ENCODE measurements at regions of chr21 and their contacts with region 1.

Region 1: GRCh38 chr21:33542640-33543504 is at the start of gene SON:
- DNase-seq: peak; percentile 100
- ATAC-seq: peak; percentile 88 to 92
- H3K4me3 ChIP-seq: peak within 1 kb of the TSS; percentile 71 to 85 (median 79)
- H3K27ac ChIP-seq: peak within 1 kb of the TSS; percentile 95 to 99 (median 99)
- H3K4me1 ChIP-seq: peaks cover 31 to 38% of the 10 kb centered on the region in 2 donors
- H3K27me3 ChIP-seq: no peaks in the 10 kb centered on the region
- CTCF ChIP-seq: peak in 2 of 5 experiments; percentile 4 to 13
- POLR2A ChIP-seq: peak; percentile 90 to 92
- total RNA-seq, gene SON: 109 to 390 (median 126) TPM

Region 2: DNA sequence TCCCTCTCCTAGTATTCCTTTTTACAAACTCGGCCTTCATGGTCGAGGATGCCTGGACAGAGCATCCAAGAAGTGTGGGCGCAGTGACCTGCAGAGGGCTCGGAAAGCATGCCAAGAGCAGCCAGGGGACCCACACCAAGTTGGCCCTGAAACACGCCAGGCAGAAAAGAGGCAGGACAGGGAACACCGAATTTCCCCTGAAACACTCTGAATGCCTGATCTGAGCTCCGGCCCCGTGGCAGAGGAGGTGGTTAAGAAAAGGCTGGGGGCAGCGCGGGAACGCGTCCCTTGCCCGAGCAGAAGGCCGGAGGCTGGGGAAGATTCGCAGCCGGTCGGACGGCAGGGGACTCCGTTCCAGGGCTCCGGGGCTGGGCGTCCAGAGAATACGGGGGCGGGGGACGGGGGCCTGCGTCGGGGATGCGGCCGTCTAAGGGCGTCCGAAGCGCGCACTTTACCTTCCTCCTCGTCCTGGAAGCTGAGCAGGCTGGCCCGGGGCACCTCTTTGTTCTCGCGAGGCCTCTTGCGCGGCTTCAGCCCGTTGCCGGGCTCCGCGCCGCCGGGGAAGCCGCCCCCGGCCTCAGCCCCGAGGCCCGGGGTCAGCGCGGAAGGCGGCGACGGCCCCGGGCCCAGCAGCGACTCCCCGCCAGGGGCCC is 771.9 kb before region 1 on chr21:
- in situ Hi-C with region 1: loop called in 1 of 4 experiments (anchors 25 kb)
- intact Hi-C with region 1: loop called (anchors 5 kb)
- DNase-seq: peak; percentile 27 to 42
- ATAC-seq: peak; percentile 53 to 60
- H3K4me3 ChIP-seq: peak overlapping the region; percentile 83 to 94 (median 86)
- H3K27ac ChIP-seq: peak overlapping the region; percentile 87 to 95 (median 88)
- H3K4me1 ChIP-seq: peaks cover 34 to 40% of the 10 kb centered on the region in 2 donors
- H3K27me3 ChIP-seq: peaks cover 0 to 4% (median 0%) of the 10 kb centered on the region in 3 donors
- CTCF ChIP-seq: no peak
- POLR2A ChIP-seq: no peak

Region 3: GRCh38 chr21:33308586-33309490 is 234.0 kb before region 1 on chr21:
- in situ Hi-C with region 1: no loop called
- intact Hi-C with region 1: no loop called
- DNase-seq: no peak
- ATAC-seq: no peak
- H3K4me3 ChIP-seq: no peak overlapping the region
- H3K27ac ChIP-seq: no peak overlapping the region
- H3K4me1 ChIP-seq: no peaks in the 10 kb centered on the region
- H3K27me3 ChIP-seq: no peaks in the 10 kb centered on the region
- CTCF ChIP-seq: no peak
- POLR2A ChIP-seq: no peak

Region 4: GRCh38 chr21:33479679-33480480 is 63.0 kb before region 1 on chr21 and contains the start of gene TMEM50B:
- in situ Hi-C with region 1: no loop called
- intact Hi-C with region 1: loop called (anchors 1 kb)
- DNase-seq: peak; percentile 94 to 95
- ATAC-seq: peak; percentile 90 to 91
- H3K4me3 ChIP-seq: peak within 1 kb of the TSS; percentile 74 to 99 (median 88)
- H3K27ac ChIP-seq: peak within 1 kb of the TSS; percentile 88 to 98 (median 94)
- H3K4me1 ChIP-seq: peaks cover 13 to 14% of the 10 kb centered on the region in 2 donors
- H3K27me3 ChIP-seq: no peaks in the 10 kb centered on the region
- CTCF ChIP-seq: peak; percentile 44 to 68 (median 52)
- POLR2A ChIP-seq: peak; percentile 94 to 97
- total RNA-seq, gene TMEM50B: 33.2 to 47.1 (median 44.6) TPM

Region 5: GRCh38 chr21:33491373-33492102 is 51.3 kb before region 1 on chr21 and contains the start of gene DNAJC28:
- in situ Hi-C with region 1: no loop called
- intact Hi-C with region 1: loop called (anchors 1 kb)
- DNase-seq: peak; percentile 81 to 88
- ATAC-seq: peak; percentile 97 to 99
- H3K4me3 ChIP-seq: peak within 1 kb of the TSS; percentile 59 to 93 (median 82)
- H3K27ac ChIP-seq: peak within 1 kb of the TSS; percentile 86 to 91 (median 88)
- H3K4me1 ChIP-seq: peaks cover 3 to 12% of the 10 kb centered on the region in 2 donors
- H3K27me3 ChIP-seq: no peaks in the 10 kb centered on the region
- CTCF ChIP-seq: no peak
- POLR2A ChIP-seq: peak; percentile 44 to 50
- total RNA-seq, gene DNAJC28: 1.5 to 3.4 (median 2.5) TPM

Region 6: DNA sequence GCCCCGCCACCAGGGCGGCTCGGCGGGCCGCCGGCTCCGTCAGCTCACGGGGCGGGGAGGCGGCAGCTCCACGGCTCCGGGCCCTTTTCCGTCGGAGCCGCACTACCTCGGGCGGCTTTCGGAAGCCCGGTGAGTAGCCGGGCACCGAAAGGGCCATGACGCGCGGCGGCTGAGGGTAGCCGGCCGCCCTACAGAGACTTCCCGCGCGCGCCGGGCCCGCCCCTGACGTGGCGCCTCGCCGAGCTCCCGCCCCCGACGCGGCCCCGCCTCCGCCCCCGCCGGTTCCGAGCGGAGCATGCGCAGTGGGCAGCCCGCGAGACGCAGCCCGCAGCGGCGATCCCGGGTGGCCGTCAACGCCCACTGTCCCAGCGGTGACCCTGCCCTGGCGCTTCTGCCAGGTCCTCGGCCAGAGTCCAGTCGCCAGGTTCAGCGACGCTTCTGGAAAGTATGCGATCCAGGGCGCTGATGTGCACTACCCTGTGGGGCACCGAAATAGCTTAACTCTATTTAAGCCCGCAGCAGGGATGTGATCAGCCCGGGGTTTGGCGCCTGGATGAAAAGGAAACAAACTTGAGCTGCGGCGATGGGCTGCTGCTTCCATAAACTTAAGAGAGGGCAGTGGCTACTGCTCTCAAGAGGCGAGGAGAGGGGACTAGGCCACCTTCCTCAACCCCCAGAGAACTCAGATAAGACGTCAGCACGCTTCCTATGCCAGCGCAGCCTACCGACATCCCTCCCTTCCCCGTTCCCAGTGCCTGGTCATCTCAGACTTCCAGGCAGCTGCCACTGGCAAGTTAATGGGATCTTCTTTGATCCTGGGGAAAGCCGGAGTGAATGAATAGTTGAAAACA is 45.8 kb after region 1 on chr21 and contains the start of gene DONSON:
- in situ Hi-C with region 1: no loop called
- intact Hi-C with region 1: loop called (anchors 2 kb)
- DNase-seq: peak; percentile 63 to 87
- ATAC-seq: peak; percentile 93 to 95
- H3K4me3 ChIP-seq: peak within 1 kb of the TSS; percentile 55 to 75 (median 70)
- H3K27ac ChIP-seq: peak within 1 kb of the TSS; percentile 78 to 90 (median 84)
- H3K4me1 ChIP-seq: peaks cover 10 to 14% of the 10 kb centered on the region in 2 donors
- H3K27me3 ChIP-seq: no peaks in the 10 kb centered on the region
- CTCF ChIP-seq: peak in 2 of 5 experiments; percentile 6
- POLR2A ChIP-seq: peak; percentile 55 to 68
- total RNA-seq, gene DONSON: 3.6 to 5.3 (median 4.2) TPM

Region 7: GRCh38 chr21:33608559-33608958 is 65.7 kb after region 1 on chr21:
- in situ Hi-C with region 1: no loop called
- intact Hi-C with region 1: loop called (anchors 2 kb)
- DNase-seq: no peak
- ATAC-seq: no peak
- H3K4me3 ChIP-seq: no peak overlapping the region
- H3K27ac ChIP-seq: no peak overlapping the region
- H3K4me1 ChIP-seq: peaks cover 10 to 13% of the 10 kb centered on the region in 2 donors
- H3K27me3 ChIP-seq: no peaks in the 10 kb centered on the region
- CTCF ChIP-seq: no peak
- POLR2A ChIP-seq: no peak